GM13976 (cell line): ENCODE measurements at regions of chr2 and their contacts with region 1.

Region 1: GRCh38 chr2:222982010-222982908 is 69.7 kb upstream of the KCNE4 start:
- DNase-seq: no peak
- CTCF ChIP-seq: no peak

Region 2: DNA sequence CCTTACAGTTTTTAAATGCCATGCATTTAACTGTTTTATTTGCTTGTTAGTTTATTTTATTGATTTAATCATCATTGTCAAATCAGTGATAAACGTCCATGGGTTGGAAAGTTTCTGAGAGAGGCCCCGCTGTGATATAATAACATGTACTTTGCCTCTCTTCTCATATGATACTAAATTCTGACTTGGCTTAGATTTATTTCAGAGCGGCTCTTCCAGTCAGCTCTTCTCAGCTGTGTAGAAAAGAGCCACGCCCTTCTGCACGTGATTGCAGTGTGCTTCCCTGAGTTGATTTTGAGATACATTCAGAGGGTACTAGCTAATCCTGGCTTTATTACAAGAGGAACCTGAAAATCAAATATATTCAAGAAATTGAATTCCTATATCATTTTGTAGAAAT is 288.3 kb after region 1 on chr2:
- in situ Hi-C with region 1: no loop called
- DNase-seq: no peak
- CTCF ChIP-seq: no peak

Region 3: GRCh38 chr2:223306371-223306770 is 324.1 kb after region 1 on chr2:
- in situ Hi-C with region 1: loop called (anchors 25 kb)
- DNase-seq: no peak
- CTCF ChIP-seq: peak; percentile 32

Region 4: GRCh38 chr2:223457301-223457700 is 475.0 kb after region 1 on chr2:
- in situ Hi-C with region 1: no loop called
- DNase-seq: no peak
- CTCF ChIP-seq: no peak